T-cell (primary cell): ENCODE measurements at regions of chr17 and their contacts with region 1.

Region 1: DNA sequence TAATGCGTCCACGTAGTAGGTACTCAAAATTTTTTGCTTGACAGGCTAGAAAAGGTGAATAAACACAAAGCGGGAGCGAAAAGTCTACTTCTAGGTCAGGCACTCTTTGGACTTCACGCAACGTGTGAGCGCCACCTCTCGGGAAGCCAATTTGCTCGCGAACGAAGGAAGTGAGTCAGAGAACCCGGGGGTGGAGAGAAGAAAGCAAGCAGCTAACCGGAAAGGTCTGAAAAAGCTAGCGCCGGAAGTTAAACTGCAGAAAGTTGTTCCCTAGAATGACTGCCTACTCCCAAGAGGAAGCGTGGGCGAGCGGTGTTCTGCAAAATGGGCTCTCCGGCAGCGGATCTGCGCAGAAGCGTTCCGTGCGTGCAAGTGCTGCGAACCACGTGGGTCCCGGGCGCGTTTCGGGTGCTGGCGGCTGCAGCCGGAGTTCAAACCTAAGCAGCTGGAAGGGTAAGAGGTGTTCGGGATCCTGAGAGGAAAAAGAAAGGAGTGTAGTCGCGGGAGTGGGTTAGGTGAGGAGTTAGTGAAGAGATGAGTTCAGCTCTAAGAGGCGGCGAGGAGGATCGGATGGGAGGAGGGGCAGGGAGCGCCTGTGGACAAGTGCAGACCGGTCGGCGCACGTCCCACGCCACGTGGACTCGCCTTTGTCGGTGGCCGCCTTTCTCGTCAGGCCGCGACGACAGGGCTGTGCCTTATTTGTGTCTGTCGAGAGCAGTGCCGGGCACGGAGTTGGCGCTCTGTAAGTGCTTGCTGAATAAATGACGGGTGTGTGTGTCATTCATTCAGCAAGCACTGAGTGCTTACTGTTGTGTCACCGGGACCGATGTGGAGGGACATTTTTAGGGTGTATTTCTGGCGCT is at the start of gene NME1:
- DNase-seq: peak; percentile 90 to 99 (median 95)
- ATAC-seq: peak; percentile 93 to 96 (median 96)
- H3K4me3 ChIP-seq: peak within 1 kb of the TSS; percentile 87 to 90
- H3K4me3 Mint-ChIP-seq: no peak within 1 kb of the TSS
- H3K27ac ChIP-seq: peak within 1 kb of the TSS; percentile 82
- H3K27ac Mint-ChIP-seq: no peak within 1 kb of the TSS
- H3K4me1 ChIP-seq: peaks cover 11 to 21% of the 10 kb centered on the region in 2 experiments
- H3K4me1 Mint-ChIP-seq: peaks cover 5 to 7% (median 5%) of the 10 kb centered on the region in 3 donors
- H3K27me3 ChIP-seq: no peaks in the 10 kb centered on the region
- H3K27me3 Mint-ChIP-seq: no peaks in the 10 kb centered on the region
- total RNA-seq, gene NME1: 17.7 to 28.0 (median 22.1) TPM

Region 2: GRCh38 chr17:50976951-50977472 is 176.4 kb before region 1 on chr17:
- CTCF ChIA-PET with region 1: no interaction called
- POLR2A ChIA-PET with region 1: no interaction called
- DNase-seq: no peak
- ATAC-seq: no peak
- H3K4me3 ChIP-seq: no peak overlapping the region
- H3K4me3 Mint-ChIP-seq: no peak overlapping the region
- H3K27ac ChIP-seq: no peak overlapping the region
- H3K27ac Mint-ChIP-seq: peak overlapping the region; percentile 55 to 69
- H3K4me1 ChIP-seq: peaks cover 0 to 9% of the 10 kb centered on the region in 2 experiments
- H3K4me1 Mint-ChIP-seq: peaks cover 14 to 19% (median 19%) of the 10 kb centered on the region in 3 donors
- H3K27me3 ChIP-seq: no peaks in the 10 kb centered on the region
- H3K27me3 Mint-ChIP-seq: no peaks in the 10 kb centered on the region

Region 3: GRCh38 chr17:51000835-51001638 is 152.4 kb before region 1 on chr17:
- CTCF ChIA-PET with region 1: interaction called, 10 to 61 read pairs
- POLR2A ChIA-PET with region 1: interaction called, 3 to 4 read pairs
- DNase-seq: peak in 13 of 35 experiments; percentile 2 to 82 (median 20)
- ATAC-seq: peak; percentile 57 to 85 (median 77)
- H3K4me3 ChIP-seq: no peak overlapping the region
- H3K4me3 Mint-ChIP-seq: no peak overlapping the region
- H3K27ac ChIP-seq: no peak overlapping the region
- H3K27ac Mint-ChIP-seq: peak overlapping the region in 1 of 2 donors; percentile 29
- H3K4me1 ChIP-seq: no peaks in the 10 kb centered on the region
- H3K4me1 Mint-ChIP-seq: peaks cover 0 to 6% (median 4%) of the 10 kb centered on the region in 3 donors
- H3K27me3 ChIP-seq: no peaks in the 10 kb centered on the region
- H3K27me3 Mint-ChIP-seq: no peaks in the 10 kb centered on the region

Region 4: GRCh38 chr17:51006601-51007000 is 146.8 kb before region 1 on chr17:
- CTCF ChIA-PET with region 1: interaction called, 10 to 61 read pairs
- POLR2A ChIA-PET with region 1: interaction called in 1 of 2 experiments, 4 read pairs
- DNase-seq: no peak
- ATAC-seq: no peak
- H3K4me3 ChIP-seq: no peak overlapping the region
- H3K4me3 Mint-ChIP-seq: no peak overlapping the region
- H3K27ac ChIP-seq: no peak overlapping the region
- H3K27ac Mint-ChIP-seq: peak overlapping the region in 1 of 2 donors; percentile 1
- H3K4me1 ChIP-seq: no peaks in the 10 kb centered on the region
- H3K4me1 Mint-ChIP-seq: no peaks in the 10 kb centered on the region
- H3K27me3 ChIP-seq: no peaks in the 10 kb centered on the region
- H3K27me3 Mint-ChIP-seq: no peaks in the 10 kb centered on the region

Region 5: GRCh38 chr17:51035431-51035830 is 118.0 kb before region 1 on chr17:
- CTCF ChIA-PET with region 1: interaction called in 1 of 2 experiments, 10 read pairs
- POLR2A ChIA-PET with region 1: no interaction called
- DNase-seq: no peak
- ATAC-seq: no peak
- H3K4me3 ChIP-seq: no peak overlapping the region
- H3K4me3 Mint-ChIP-seq: no peak overlapping the region
- H3K27ac ChIP-seq: no peak overlapping the region
- H3K27ac Mint-ChIP-seq: peak overlapping the region in 1 of 2 donors; percentile 4
- H3K4me1 ChIP-seq: peaks cover 5 to 12% of the 10 kb centered on the region in 2 experiments
- H3K4me1 Mint-ChIP-seq: peaks cover 17 to 33% (median 25%) of the 10 kb centered on the region in 3 donors
- H3K27me3 ChIP-seq: no peaks in the 10 kb centered on the region
- H3K27me3 Mint-ChIP-seq: no peaks in the 10 kb centered on the region